ENCODE measurements at regions of chr19 and their contacts with region 1.

Region 1: GRCh38 chr19:28737021-28737895 is 475.7 kb downstream of the UQCRFS1 start:
- DNase-seq: no peak
- ATAC-seq: peak in 3 of 4 donors; percentile 52 to 76 (median 58)
- H3K4me3 ChIP-seq: peak overlapping the region in 3 of 12 donors; percentile 14 to 25 (median 22)
- H3K27ac ChIP-seq: peak overlapping the region in 4 of 12 donors; percentile 27 to 46 (median 31)
- H3K4me1 ChIP-seq: peaks cover 0 to 13% (median 2%) of the 10 kb centered on the region in 12 donors
- H3K27me3 ChIP-seq: no peaks in the 10 kb centered on the region
- CTCF ChIP-seq: peak; percentile 23 to 78 (median 62)
- POLR2A ChIP-seq: no peak

Region 2: GRCh38 chr19:28504139-28504538 is 233.1 kb before region 1 on chr19:
- intact Hi-C with region 1: no loop called
- DNase-seq: no peak
- ATAC-seq: peak in 2 of 4 donors; percentile 39 to 54
- H3K4me3 ChIP-seq: no peak overlapping the region
- H3K27ac ChIP-seq: no peak overlapping the region
- H3K4me1 ChIP-seq: peaks cover 0 to 9% (median 0%) of the 10 kb centered on the region in 12 donors
- H3K27me3 ChIP-seq: no peaks in the 10 kb centered on the region
- CTCF ChIP-seq: no peak
- POLR2A ChIP-seq: no peak

Region 3: GRCh38 chr19:28864577-28865042 is 127.4 kb after region 1 on chr19:
- intact Hi-C with region 1: loop called in 1 of 10 experiments (anchors 5 kb)
- DNase-seq: peak; percentile 67 to 86 (median 74)
- ATAC-seq: peak; percentile 76 to 90 (median 86)
- H3K4me3 ChIP-seq: no peak overlapping the region
- H3K27ac ChIP-seq: peak overlapping the region in 10 of 12 donors; percentile 46 to 74 (median 62)
- H3K4me1 ChIP-seq: peaks cover 0 to 17% (median 6%) of the 10 kb centered on the region in 12 donors
- H3K27me3 ChIP-seq: peaks cover 0 to 4% (median 0%) of the 10 kb centered on the region in 9 donors
- CTCF ChIP-seq: no peak
- POLR2A ChIP-seq: no peak

Region 4: GRCh38 chr19:28878862-28879566 is 141.8 kb after region 1 on chr19:
- intact Hi-C with region 1: loop called (anchors 1 to 5 kb)
- DNase-seq: peak; percentile 42 to 75 (median 67)
- ATAC-seq: peak in 3 of 4 donors; percentile 23 to 40 (median 23)
- H3K4me3 ChIP-seq: no peak overlapping the region
- H3K27ac ChIP-seq: no peak overlapping the region
- H3K4me1 ChIP-seq: peaks cover 0 to 15% (median 5%) of the 10 kb centered on the region in 12 donors
- H3K27me3 ChIP-seq: no peaks in the 10 kb centered on the region
- CTCF ChIP-seq: peak; percentile 53 to 84 (median 73)
- POLR2A ChIP-seq: no peak

Region 5: GRCh38 chr19:28980236-28980868 is 243.1 kb after region 1 on chr19:
- intact Hi-C with region 1: loop called in 1 of 10 experiments (anchors 10 kb)
- DNase-seq: no peak
- ATAC-seq: peak in 2 of 4 donors; percentile 73 to 74
- H3K4me3 ChIP-seq: no peak overlapping the region
- H3K27ac ChIP-seq: no peak overlapping the region
- H3K4me1 ChIP-seq: no peaks in the 10 kb centered on the region
- H3K27me3 ChIP-seq: peaks cover 0 to 6% (median 0%) of the 10 kb centered on the region in 9 donors
- CTCF ChIP-seq: peak in 11 of 12 donors; percentile 12 to 41 (median 34)
- POLR2A ChIP-seq: no peak

Region 6: GRCh38 chr19:29263305-29264135 is 526.3 kb after region 1 on chr19:
- intact Hi-C with region 1: loop called in 6 of 10 experiments (anchors 2 to 10 kb)
- DNase-seq: no peak
- ATAC-seq: peak in 3 of 4 donors; percentile 20 to 40 (median 34)
- H3K4me3 ChIP-seq: no peak overlapping the region
- H3K27ac ChIP-seq: no peak overlapping the region
- H3K4me1 ChIP-seq: no peaks in the 10 kb centered on the region
- H3K27me3 ChIP-seq: peaks cover 0 to 22% (median 0%) of the 10 kb centered on the region in 9 donors
- CTCF ChIP-seq: peak; percentile 46 to 76 (median 64)
- POLR2A ChIP-seq: no peak

Measured in heart left ventricle (tissue), 16 donors.